ENCODE measurements at regions of chr3 and their contacts with region 1.

Region 1: GRCh38 chr3:52001443-52001974 is 5.8 kb upstream of the RPL29 start:
- DNase-seq: peak; percentile 78
- ATAC-seq: peak; percentile 65 to 67

Region 2: DNA sequence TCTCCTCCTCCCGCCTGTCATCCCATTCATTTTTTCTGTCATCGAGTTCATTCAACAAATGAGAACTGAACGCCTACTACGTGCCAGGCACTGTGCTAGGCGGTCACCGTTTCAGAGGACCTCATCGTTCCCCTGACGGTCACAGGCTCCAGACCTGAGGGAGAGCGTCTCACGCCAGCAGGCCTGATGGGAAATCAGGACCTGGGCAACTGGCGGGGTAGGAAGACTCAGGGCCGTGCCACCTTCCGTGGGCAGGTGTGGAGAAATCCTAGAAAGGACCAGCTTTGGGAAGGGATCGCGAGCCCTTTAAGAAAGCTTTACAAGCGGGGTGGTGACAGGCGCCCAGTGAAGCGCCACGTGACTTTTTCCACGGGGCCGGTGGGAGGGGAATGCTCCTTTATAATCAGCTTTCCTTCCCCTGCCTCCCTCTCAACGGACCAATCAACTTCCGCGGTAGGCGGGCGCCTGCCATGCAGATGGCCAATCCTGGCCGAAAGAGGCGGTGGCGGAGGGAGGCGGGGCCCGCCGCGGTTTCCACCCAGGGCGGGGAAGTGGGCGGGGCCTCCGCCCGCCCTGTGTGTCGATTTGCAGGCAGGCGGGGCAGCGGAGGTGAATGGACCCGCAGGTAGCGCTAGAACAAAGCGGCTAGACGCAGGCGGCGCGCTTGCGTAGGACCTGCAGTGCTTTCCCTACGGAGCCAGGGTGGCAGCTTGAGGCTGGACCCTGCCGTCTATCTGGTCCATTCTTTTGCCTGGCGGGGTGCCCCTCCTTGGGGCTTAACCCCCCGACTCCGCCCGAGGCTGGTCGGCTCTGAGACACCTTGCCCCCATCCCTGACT is 55.7 kb after region 1 on chr3:
- intact Hi-C with region 1: loop called (anchors 2 to 5 kb)
- DNase-seq: peak; percentile 99
- ATAC-seq: peak; percentile 90 to 92

Region 3: GRCh38 chr3:52123106-52123725 is 121.7 kb after region 1 on chr3:
- intact Hi-C with region 1: loop called (anchors 1 to 5 kb)
- DNase-seq: peak; percentile 77
- ATAC-seq: peak; percentile 73 to 75

Region 4: GRCh38 chr3:52144034-52144795 is 142.7 kb after region 1 on chr3:
- intact Hi-C with region 1: loop called (anchors 1 to 2 kb)
- DNase-seq: peak; percentile 90
- ATAC-seq: peak; percentile 77 to 84

Region 5: GRCh38 chr3:52220380-52221026 is 219.0 kb after region 1 on chr3:
- intact Hi-C with region 1: loop called in 1 of 2 experiments (anchors 10 kb)
- DNase-seq: peak; percentile 85
- ATAC-seq: peak; percentile 53 to 67

Region 6: DNA sequence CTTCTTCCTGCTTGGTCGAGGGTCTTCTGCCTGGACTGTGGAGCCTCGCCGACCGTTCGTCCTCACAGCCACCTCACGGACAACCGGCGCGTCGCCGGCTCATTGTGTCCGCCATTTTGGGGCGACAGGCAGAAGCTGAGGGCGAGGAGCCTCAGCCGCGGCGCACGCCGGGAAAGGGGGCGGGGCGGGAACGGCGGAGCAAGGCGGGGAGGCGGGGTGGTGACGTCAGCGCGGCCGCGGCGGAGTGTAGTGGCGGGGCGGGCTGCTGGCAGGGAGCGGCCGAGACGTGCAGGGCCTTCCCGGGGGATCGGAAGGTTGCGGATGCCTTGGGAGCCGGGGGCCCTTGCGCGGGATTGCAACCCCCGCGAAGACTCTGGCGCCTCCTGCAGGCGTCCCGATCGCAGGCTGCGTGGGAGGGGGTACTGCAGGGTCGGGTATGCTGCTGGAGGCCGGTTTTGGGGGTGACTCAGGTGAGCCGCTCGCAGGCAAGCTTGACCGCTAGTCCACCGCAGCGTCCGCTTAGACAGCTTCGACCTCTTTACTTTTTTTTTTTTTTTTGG is 277.1 kb after region 1 on chr3 and contains the start of gene WDR82:
- intact Hi-C with region 1: loop called in 1 of 2 experiments (anchors 5 kb)
- DNase-seq: peak; percentile 98
- ATAC-seq: peak; percentile 97
- total RNA-seq, gene WDR82: 57.6 to 65.5 TPM